ENCODE measurements at regions of chr13 and their contacts with region 1.

Region 1: DNA sequence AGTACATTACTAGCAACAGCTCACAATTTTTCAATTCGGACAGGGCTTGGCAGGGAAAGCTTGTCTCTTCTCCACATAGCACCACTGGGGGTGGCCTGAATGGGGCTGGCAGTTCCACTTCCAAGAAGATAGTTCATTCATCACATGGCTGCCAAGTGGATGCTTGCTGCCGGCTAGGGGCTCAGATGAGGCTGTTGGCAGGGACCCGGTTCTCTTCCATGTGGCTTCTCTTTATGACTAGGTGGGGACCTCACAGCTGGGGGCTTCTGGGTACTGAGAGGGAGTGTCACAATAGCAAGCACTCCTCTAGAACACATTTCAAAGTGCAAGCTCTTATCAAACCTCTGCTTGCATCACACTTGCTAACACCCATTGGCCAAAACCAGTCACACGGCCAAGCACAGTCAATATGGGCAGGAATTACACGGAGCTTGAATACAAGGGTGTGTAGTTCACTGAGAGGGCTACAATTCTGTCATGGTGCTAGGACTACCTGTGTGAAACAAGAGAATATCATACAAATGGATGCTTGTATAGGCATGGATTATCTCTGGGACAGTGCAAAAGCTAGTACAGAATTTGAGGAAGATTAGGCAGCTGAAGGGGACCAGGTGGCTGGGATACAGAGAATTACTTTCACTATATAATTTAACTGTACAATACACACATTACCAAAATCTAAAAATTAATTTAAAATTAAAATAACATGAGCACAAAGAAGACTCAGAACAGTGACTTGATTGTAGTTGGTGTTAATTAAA is 32.3 kb downstream of the ATP7B start:
- DNase-seq: peak; percentile 65 to 80 (median 71)
- ATAC-seq: peak; percentile 92
- H3K4me3 ChIP-seq: peak overlapping the region; percentile 4; the same call in 1 of the 2 replicates
- H3K27ac ChIP-seq: peak overlapping the region; percentile 67
- H3K4me1 ChIP-seq: peaks cover 13 to 42% of the 10 kb centered on the region in 2 experiments
- H3K27me3 ChIP-seq: no peaks in the 10 kb centered on the region
- CTCF ChIP-seq: no peak
- EP300 ChIP-seq: no peak
- POLR2A ChIP-seq: peak; percentile 58; the same call in 1 of the 2 replicates
- RAD21 ChIP-seq: no peak

Region 2: GRCh38 chr13:51825165-51825592 is 153.8 kb before region 1 on chr13:
- CTCF ChIA-PET with region 1: no interaction called
- POLR2A ChIA-PET with region 1: no interaction called
- in situ Hi-C with region 1: no loop called
- intact Hi-C with region 1: no loop called
- DNase-seq: no peak
- ATAC-seq: no peak
- H3K4me3 ChIP-seq: no peak overlapping the region
- H3K27ac ChIP-seq: no peak overlapping the region
- H3K4me1 ChIP-seq: no peaks in the 10 kb centered on the region; a peak in 1 of 5 replicates
- H3K27me3 ChIP-seq: peaks cover 3 to 33% of the 10 kb centered on the region in 2 experiments; a peak in 4 of 5 replicates
- CTCF ChIP-seq: no peak
- EP300 ChIP-seq: no peak
- POLR2A ChIP-seq: no peak
- RAD21 ChIP-seq: no peak

Region 3: GRCh38 chr13:51849145-51850101 is 129.6 kb before region 1 on chr13:
- CTCF ChIA-PET with region 1: no interaction called
- POLR2A ChIA-PET with region 1: no interaction called
- in situ Hi-C with region 1: no loop called
- intact Hi-C with region 1: no loop called
- DNase-seq: peak; percentile 47 to 62 (median 58)
- ATAC-seq: peak; percentile 91
- H3K4me3 ChIP-seq: no peak overlapping the region
- H3K27ac ChIP-seq: no peak overlapping the region
- H3K4me1 ChIP-seq: peaks cover 0 to 6% of the 10 kb centered on the region in 2 experiments; a peak in 3 of 5 replicates
- H3K27me3 ChIP-seq: no peaks in the 10 kb centered on the region
- CTCF ChIP-seq: peak; percentile 53 to 71 (median 56)
- EP300 ChIP-seq: no peak
- POLR2A ChIP-seq: no peak
- RAD21 ChIP-seq: peak in 1 of 2 experiments; percentile 39; a peak in 2 of 4 replicates

Region 4: DNA sequence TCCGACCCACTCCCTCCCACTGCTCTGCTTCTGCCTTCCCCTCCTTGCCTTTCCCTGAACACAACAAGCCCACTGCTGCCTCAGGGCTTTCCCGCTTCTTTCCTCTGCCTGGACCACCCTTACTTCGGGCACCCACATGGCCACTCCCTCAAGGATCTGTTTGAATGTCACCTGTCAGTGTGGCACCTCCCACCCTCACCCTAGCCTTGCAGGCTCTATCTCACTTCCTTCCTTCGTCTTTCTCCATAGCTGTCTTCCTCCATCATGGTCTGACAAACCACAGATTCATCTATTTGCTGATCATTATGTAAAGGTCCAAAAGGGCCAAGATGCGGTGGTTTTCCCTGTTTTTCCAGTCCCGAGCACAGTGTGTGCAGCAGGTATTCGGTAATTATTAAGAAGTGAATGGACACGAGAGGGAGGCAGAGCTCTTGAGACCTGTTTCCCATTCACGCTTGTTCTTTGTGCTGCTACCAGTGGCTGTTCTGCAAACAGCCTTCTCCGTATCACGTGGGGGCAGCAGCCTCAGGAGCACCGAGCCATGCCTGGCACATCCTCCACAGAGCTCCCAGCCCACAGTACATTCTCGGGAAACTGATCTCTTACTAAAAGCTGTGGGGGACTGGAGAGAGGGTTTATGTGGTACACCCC is 67.0 kb before region 1 on chr13:
- CTCF ChIA-PET with region 1: no interaction called
- POLR2A ChIA-PET with region 1: no interaction called
- in situ Hi-C with region 1: no loop called
- intact Hi-C with region 1: no loop called
- DNase-seq: no peak
- ATAC-seq: no peak
- H3K4me3 ChIP-seq: no peak overlapping the region
- H3K27ac ChIP-seq: no peak overlapping the region
- H3K4me1 ChIP-seq: no peaks in the 10 kb centered on the region
- H3K27me3 ChIP-seq: no peaks in the 10 kb centered on the region
- CTCF ChIP-seq: no peak
- EP300 ChIP-seq: no peak
- POLR2A ChIP-seq: no peak
- RAD21 ChIP-seq: no peak

Region 5: GRCh38 chr13:51942189-51942588 is 36.8 kb before region 1 on chr13:
- CTCF ChIA-PET with region 1: no interaction called
- POLR2A ChIA-PET with region 1: no interaction called
- in situ Hi-C with region 1: no loop called
- intact Hi-C with region 1: no loop called
- DNase-seq: no peak
- ATAC-seq: no peak
- H3K4me3 ChIP-seq: no peak overlapping the region
- H3K27ac ChIP-seq: no peak overlapping the region
- H3K4me1 ChIP-seq: peaks cover 0 to 9% of the 10 kb centered on the region in 2 experiments; a peak in 2 of 5 replicates
- H3K27me3 ChIP-seq: no peaks in the 10 kb centered on the region
- CTCF ChIP-seq: no peak
- EP300 ChIP-seq: no peak
- POLR2A ChIP-seq: no peak
- RAD21 ChIP-seq: no peak

Region 6: GRCh38 chr13:51995677-51996551 is 16.9 kb after region 1 on chr13:
- CTCF ChIA-PET with region 1: no interaction called
- POLR2A ChIA-PET with region 1: interaction called, 10 read pairs
- in situ Hi-C with region 1: no loop called
- intact Hi-C with region 1: no loop called
- DNase-seq: peak; percentile 33 to 51 (median 38)
- ATAC-seq: peak; percentile 50
- H3K4me3 ChIP-seq: peak overlapping the region; percentile 29; the same call in 1 of the 2 replicates
- H3K27ac ChIP-seq: peak overlapping the region; percentile 72
- H3K4me1 ChIP-seq: peaks cover 44 to 59% of the 10 kb centered on the region in 2 experiments
- H3K27me3 ChIP-seq: no peaks in the 10 kb centered on the region
- CTCF ChIP-seq: peak; percentile 9 to 33 (median 31); a peak in 3 of 6 replicates
- EP300 ChIP-seq: no peak
- POLR2A ChIP-seq: no peak
- RAD21 ChIP-seq: no peak

Measured in K562 (cell line).